HepG2 (cell line): ENCODE measurements at regions of chr18 and their contacts with region 1.

Region 1: DNA sequence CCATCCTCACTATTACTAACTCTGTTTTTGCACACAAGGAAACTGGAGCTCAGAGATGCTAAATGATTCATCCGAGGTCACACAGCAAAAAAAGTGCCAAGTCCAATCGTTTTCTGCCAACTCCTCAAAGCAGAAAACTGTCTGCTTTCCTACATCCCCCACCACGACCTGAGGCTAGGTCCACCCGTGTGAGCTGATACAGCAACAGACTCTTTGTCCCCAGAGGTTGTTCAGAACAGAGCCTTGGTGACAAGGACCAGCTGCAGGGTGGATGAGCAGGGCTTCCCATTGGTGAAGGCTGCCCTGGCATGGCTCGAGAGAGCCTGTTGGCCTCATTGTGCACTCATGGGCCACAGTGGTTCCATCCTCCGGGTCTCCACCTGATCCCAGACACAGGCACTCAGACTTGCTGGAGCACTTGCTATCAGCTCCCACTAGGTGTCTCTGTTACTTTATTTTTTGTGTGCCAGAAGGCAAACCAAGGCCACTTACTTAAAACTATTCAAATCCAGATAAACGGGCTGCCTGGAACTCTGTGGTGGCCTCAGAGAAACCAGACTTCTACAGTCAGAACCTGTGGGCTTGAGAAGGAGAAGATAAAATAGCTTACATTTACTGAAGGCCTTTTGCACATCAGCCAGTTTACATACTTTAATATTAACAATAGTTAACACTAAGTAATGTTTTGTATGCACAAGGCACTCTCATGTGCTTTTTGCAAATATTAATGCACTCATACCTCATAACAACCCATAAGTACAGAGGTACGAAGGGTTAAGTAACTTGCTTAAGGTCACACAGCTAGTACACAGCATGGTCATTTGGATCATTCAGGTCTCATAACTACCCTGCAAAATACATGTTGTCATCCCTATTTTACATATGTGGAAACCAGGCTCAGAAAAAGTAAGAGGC is 62.9 kb upstream of the CTIF start:
- DNase-seq: peak; percentile 80
- ATAC-seq: peak; percentile 98
- H3K4me3 ChIP-seq: no peak overlapping the region
- H3K27ac ChIP-seq: no peak overlapping the region
- H3K4me1 ChIP-seq: peaks cover 19% of the 10 kb centered on the region
- H3K27me3 ChIP-seq: peaks cover 0 to 3% of the 10 kb centered on the region in 2 experiments; a peak in 2 of 5 replicates
- CTCF ChIP-seq: peak; percentile 90
- EP300 ChIP-seq: no peak
- POLR2A ChIP-seq: no peak
- RAD21 ChIP-seq: peak; percentile 93

Region 2: DNA sequence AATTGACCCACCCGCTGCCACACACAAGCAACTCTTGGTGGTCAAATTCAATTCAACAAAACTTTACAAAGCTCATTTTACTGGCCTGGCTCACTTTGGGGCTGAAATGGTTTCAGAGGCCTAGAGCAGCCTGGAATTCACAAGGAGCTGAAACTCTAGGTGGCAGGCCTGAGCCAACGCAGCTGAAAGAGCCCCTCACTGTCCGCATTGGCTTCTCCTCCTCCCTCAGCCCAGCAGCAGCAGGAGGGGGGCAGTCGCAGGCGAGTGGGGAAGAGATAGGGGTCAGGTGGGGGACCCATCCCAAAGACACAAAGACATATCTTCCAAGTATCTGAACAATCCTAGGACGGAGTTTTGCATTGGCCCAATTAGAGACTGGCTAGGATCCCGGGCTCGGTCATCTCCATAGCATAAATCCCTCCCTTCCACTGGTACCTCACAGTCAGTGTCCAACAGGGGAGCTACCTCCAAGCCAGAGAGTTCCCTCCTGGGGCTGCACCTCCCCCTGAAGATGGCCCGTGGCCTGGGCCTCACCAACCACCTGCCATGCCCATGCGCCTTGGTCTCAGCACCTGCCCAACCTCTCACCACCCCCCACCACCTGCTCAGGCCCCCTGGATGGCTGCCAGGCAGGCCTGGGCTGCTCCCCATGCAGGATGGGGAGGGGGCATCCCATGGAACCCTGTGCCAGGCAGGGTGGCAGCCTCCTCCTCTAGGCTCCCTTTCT is 180.1 kb before region 1 on chr18:
- CTCF ChIA-PET with region 1: no interaction called
- POLR2A ChIA-PET with region 1: no interaction called
- in situ Hi-C with region 1: no loop called
- intact Hi-C with region 1: no loop called
- DNase-seq: peak; percentile 3
- ATAC-seq: peak; percentile 78
- H3K4me3 ChIP-seq: no peak overlapping the region
- H3K27ac ChIP-seq: no peak overlapping the region
- H3K4me1 ChIP-seq: no peaks in the 10 kb centered on the region
- H3K27me3 ChIP-seq: no peaks in the 10 kb centered on the region; a peak in 1 of 5 replicates
- CTCF ChIP-seq: peak; percentile 39
- EP300 ChIP-seq: no peak
- POLR2A ChIP-seq: no peak
- RAD21 ChIP-seq: no peak

Region 3: GRCh38 chr18:48575658-48576456 is 100.0 kb after region 1 on chr18:
- CTCF ChIA-PET with region 1: no interaction called
- POLR2A ChIA-PET with region 1: interaction called, 3 read pairs
- in situ Hi-C with region 1: loop called (anchors 10 kb)
- intact Hi-C with region 1: no loop called
- DNase-seq: peak; percentile 92
- ATAC-seq: peak; percentile 89
- H3K4me3 ChIP-seq: peak overlapping the region; percentile 38 to 64 (median 40)
- H3K27ac ChIP-seq: peak overlapping the region; percentile 94
- H3K4me1 ChIP-seq: peaks cover 81% of the 10 kb centered on the region
- H3K27me3 ChIP-seq: no peaks in the 10 kb centered on the region
- CTCF ChIP-seq: no peak
- EP300 ChIP-seq: peak; percentile 75 to 77; a peak in 2 of 4 replicates
- POLR2A ChIP-seq: peak in 1 of 2 experiments; percentile 53; a peak in 2 of 4 replicates
- RAD21 ChIP-seq: no peak

Region 4: DNA sequence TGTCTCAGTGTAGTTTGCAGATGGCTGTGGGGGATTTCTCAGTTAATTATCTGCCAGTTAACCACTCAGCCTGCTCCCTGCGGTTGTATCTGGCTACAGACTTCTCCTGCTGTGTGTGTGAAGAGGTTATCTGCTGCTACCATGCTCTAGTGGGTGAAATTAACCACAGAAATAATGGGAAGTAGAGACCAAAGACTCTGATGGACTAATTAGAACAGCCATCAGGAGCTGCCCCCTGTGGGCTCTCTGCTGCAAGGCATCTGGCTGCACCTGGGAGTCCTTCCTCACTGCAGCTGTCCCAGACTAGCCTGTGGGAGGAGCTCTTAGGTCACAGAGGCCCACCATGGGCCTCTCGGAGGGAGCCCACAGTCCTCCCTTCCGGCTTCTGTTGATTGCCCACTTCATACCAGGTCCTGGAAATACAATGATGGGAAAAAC is 129.5 kb after region 1 on chr18:
- CTCF ChIA-PET with region 1: interaction called, 11 read pairs
- POLR2A ChIA-PET with region 1: no interaction called
- in situ Hi-C with region 1: no loop called
- intact Hi-C with region 1: loop called (anchors 1 kb)
- DNase-seq: peak; percentile 73
- ATAC-seq: peak; percentile 99
- H3K4me3 ChIP-seq: no peak overlapping the region
- H3K27ac ChIP-seq: no peak overlapping the region
- H3K4me1 ChIP-seq: peaks cover 34% of the 10 kb centered on the region
- H3K27me3 ChIP-seq: no peaks in the 10 kb centered on the region
- CTCF ChIP-seq: peak; percentile 88
- EP300 ChIP-seq: peak in 1 of 2 experiments; percentile 13; a peak in 1 of 4 replicates
- POLR2A ChIP-seq: no peak
- RAD21 ChIP-seq: peak; percentile 92

Region 5: GRCh38 chr18:48629730-48630324 is 153.9 kb after region 1 on chr18:
- CTCF ChIA-PET with region 1: no interaction called
- POLR2A ChIA-PET with region 1: no interaction called
- in situ Hi-C with region 1: loop called (anchors 10 kb)
- intact Hi-C with region 1: no loop called
- DNase-seq: peak; percentile 87
- ATAC-seq: peak; percentile 94
- H3K4me3 ChIP-seq: no peak overlapping the region
- H3K27ac ChIP-seq: peak overlapping the region; percentile 65
- H3K4me1 ChIP-seq: peaks cover 75% of the 10 kb centered on the region
- H3K27me3 ChIP-seq: no peaks in the 10 kb centered on the region
- CTCF ChIP-seq: no peak
- EP300 ChIP-seq: no peak
- POLR2A ChIP-seq: no peak
- RAD21 ChIP-seq: no peak

Region 6: GRCh38 chr18:48639772-48640432 is 164.0 kb after region 1 on chr18:
- CTCF ChIA-PET with region 1: interaction called, 3 read pairs
- POLR2A ChIA-PET with region 1: interaction called, 3 read pairs
- in situ Hi-C with region 1: loop called (anchors 10 kb)
- intact Hi-C with region 1: loop called (anchors 1 kb)
- DNase-seq: no peak
- ATAC-seq: peak; percentile 61
- H3K4me3 ChIP-seq: no peak overlapping the region
- H3K27ac ChIP-seq: no peak overlapping the region
- H3K4me1 ChIP-seq: peaks cover 11% of the 10 kb centered on the region
- H3K27me3 ChIP-seq: no peaks in the 10 kb centered on the region
- CTCF ChIP-seq: peak; percentile 51
- EP300 ChIP-seq: no peak
- POLR2A ChIP-seq: no peak
- RAD21 ChIP-seq: peak; percentile 71

Region 7: DNA sequence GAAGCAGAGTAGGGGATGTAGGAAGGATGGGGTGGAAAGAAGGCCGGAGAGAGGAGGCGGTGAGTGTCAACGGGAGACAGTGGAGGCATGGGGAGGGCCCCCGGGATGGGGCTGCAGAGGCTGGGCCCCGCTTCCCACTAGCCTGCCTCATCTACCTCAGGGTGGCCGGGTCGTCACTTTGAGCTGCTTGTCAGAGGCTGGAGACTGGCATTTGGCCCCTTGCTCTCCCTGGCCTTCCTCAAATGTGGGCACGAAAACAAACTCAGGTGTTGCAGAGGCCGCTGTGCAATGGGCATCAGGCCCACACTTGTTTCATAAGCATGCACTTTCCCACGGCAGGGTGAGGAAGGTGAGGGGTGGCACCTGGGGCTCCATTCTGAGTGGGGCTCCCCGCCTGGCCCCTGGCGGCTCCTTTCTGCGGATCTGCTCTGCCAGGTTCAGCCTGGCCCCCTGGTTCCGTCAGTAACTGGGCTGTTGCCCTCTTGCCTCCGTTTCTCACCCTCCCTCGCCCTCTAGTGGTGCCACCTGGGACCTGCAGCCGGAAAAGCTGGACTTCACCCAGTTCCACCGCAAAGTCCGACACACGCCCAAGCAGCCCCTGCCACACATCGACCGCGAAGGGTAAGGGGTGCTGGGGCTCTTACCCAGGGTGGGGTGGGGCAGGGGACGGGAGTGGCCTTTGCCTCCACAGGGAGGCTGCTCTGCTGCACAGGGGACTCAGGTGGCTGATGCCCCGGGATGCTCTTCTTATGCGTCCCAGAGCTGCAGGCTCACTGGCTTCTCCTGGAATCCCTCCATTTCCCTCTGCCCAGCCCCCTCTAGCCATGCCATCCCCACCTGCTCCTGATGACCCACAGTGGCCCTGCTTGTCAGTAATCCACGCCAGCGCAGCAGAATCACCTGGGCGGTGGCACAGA is 188.3 kb after region 1 on chr18:
- CTCF ChIA-PET with region 1: interaction called, 21 read pairs
- POLR2A ChIA-PET with region 1: no interaction called
- in situ Hi-C with region 1: loop called (anchors 5 kb)
- intact Hi-C with region 1: loop called (anchors 1 kb)
- DNase-seq: peak; percentile 42
- ATAC-seq: peak; percentile 65
- H3K4me3 ChIP-seq: no peak overlapping the region
- H3K27ac ChIP-seq: no peak overlapping the region
- H3K4me1 ChIP-seq: peaks cover 17% of the 10 kb centered on the region
- H3K27me3 ChIP-seq: no peaks in the 10 kb centered on the region
- CTCF ChIP-seq: peak; percentile 96
- EP300 ChIP-seq: no peak
- POLR2A ChIP-seq: no peak
- RAD21 ChIP-seq: peak; percentile 86